ENCODE measurements at regions of chr2 and their contacts with region 1.

Region 1: GRCh38 chr2:205680067-205680466 is 2.2 kb upstream of the NRP2 start:
- DNase-seq: peak; percentile 52 to 56
- H3K4me3 ChIP-seq: no peak overlapping the region
- H3K27ac ChIP-seq: no peak overlapping the region
- H3K4me1 ChIP-seq: no peaks in the 10 kb centered on the region; the same call in none of the 2 replicates
- H3K27me3 ChIP-seq: no peaks in the 10 kb centered on the region
- CTCF ChIP-seq: peak; percentile 74

Region 2: GRCh38 chr2:204260162-204260877 is 1419.7 kb before region 1 on chr2:
- CTCF ChIA-PET with region 1: no interaction called
- POLR2A ChIA-PET with region 1: no interaction called
- intact Hi-C with region 1: loop called (anchors 5 kb)
- DNase-seq: peak; percentile 24 to 35
- H3K4me3 ChIP-seq: no peak overlapping the region
- H3K27ac ChIP-seq: no peak overlapping the region
- H3K4me1 ChIP-seq: no peaks in the 10 kb centered on the region
- H3K27me3 ChIP-seq: no peaks in the 10 kb centered on the region
- CTCF ChIP-seq: peak; percentile 81

Region 3: GRCh38 chr2:204545023-204545860 is 1134.8 kb before region 1 on chr2 and contains the start of gene PARD3B:
- CTCF ChIA-PET with region 1: no interaction called
- POLR2A ChIA-PET with region 1: no interaction called
- intact Hi-C with region 1: loop called (anchors 10 kb)
- DNase-seq: peak; percentile 43 to 76
- H3K4me3 ChIP-seq: peak within 1 kb of the TSS; percentile 90
- H3K27ac ChIP-seq: peak within 1 kb of the TSS; percentile 61
- H3K4me1 ChIP-seq: peaks cover 31% of the 10 kb centered on the region
- H3K27me3 ChIP-seq: no peaks in the 10 kb centered on the region
- CTCF ChIP-seq: no peak
- total RNA-seq, gene PARD3B: 7.6 and 13.2 TPM in 2 replicates

Region 4: GRCh38 chr2:204871231-204871953 is 808.7 kb before region 1 on chr2:
- CTCF ChIA-PET with region 1: no interaction called
- POLR2A ChIA-PET with region 1: no interaction called
- intact Hi-C with region 1: loop called (anchors 1 kb)
- DNase-seq: no peak
- H3K4me3 ChIP-seq: no peak overlapping the region
- H3K27ac ChIP-seq: no peak overlapping the region
- H3K4me1 ChIP-seq: no peaks in the 10 kb centered on the region
- H3K27me3 ChIP-seq: no peaks in the 10 kb centered on the region
- CTCF ChIP-seq: peak; percentile 53

Region 5: DNA sequence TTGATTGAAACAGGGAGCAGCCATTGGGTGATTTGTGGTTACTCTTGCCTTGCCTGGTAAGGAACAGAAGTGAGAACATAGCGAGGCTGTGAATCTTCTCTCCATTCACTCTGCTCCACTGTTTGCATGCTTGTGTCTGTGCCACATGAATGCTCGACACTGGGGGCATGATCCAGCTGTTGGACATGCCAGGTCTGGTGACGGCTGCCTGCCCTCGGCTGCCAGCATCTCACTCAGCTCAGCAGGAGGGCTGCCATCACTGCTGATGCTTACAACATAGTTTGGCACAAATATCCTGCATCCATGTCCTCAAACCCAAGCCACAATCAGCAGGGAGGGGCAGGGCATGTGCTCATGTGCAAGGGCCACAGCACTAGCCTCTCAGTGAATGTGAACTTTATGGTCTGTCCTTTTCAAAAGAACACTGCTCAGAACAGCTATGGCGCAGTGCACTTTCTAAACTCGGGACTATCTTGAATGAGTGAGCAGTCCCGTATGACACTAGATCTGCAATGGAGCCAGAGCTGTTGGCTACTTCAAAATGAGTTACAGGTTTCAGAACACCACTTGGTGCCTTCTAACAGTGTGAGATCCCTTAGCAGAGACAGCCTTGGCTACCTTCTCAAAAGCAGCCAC is 128.5 kb after region 1 on chr2:
- CTCF ChIA-PET with region 1: no interaction called
- POLR2A ChIA-PET with region 1: no interaction called
- intact Hi-C with region 1: no loop called
- DNase-seq: no peak
- H3K4me3 ChIP-seq: no peak overlapping the region
- H3K27ac ChIP-seq: no peak overlapping the region
- H3K4me1 ChIP-seq: no peaks in the 10 kb centered on the region
- H3K27me3 ChIP-seq: no peaks in the 10 kb centered on the region
- CTCF ChIP-seq: no peak

Region 6: DNA sequence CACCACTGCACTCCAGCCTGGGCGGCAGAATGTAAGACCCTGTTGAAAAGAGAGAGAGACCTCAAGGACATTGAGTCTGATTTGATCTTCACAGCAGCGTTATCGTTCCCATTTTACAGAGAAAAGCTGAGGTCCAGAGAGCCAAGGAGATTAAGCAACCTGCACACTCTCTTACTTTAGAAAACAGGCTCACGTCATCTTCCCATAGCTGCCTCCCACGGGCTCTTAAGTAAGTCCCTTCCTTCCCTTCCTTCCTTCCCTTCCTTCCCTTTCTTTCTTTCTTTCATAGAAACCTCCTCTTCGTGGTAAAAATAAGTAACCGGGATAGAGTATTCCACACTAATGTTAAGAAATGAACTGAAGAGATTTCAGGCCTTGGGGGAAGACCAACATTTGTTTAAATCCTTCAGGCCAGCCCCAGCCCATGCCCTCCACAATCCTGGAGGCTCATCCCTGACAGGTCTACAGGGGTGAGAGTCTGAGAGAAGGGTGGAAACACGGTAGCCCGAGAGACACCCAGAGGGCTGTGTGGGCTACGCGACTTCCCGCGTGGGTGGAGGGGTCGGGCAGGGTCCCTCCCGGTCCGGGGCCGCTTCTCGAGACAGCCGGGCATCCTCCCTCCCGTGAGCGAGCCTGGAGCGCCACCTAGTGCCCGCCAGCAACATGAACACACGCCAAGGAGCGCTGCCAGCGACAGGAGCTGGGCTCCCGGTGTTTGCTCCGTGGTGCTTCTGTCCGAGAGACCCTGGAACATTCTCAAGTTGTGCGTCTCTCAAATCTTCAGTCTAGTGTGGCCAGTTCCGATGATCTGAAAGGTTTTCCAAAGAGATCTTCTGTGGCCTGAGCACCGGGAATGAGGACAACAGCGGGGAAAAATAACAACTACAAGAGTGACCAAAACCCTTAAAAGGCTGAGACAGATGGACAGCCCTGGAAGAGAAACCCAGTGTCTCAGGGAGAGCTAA is 245.6 kb after region 1 on chr2:
- CTCF ChIA-PET with region 1: interaction called, 4 read pairs
- POLR2A ChIA-PET with region 1: no interaction called
- intact Hi-C with region 1: loop called (anchors 5 kb)
- DNase-seq: peak in 1 of 2 experiments; percentile 50
- H3K4me3 ChIP-seq: peak overlapping the region; percentile 43; the same call in 1 of the 2 replicates
- H3K27ac ChIP-seq: no peak overlapping the region
- H3K4me1 ChIP-seq: 0 out of 2 replicates have a peak, but pooled peaks cover 4% of the 10 kb centered on the region
- H3K27me3 ChIP-seq: peaks cover 12% of the 10 kb centered on the region
- CTCF ChIP-seq: peak; percentile 90